Activated CD4-positive, alpha-beta T cell treated with anti-CD3 and anti-CD28 coated beads for 36 hours (primary cell): ENCODE measurements at regions of chr6 and their contacts with region 1.

Region 1: DNA sequence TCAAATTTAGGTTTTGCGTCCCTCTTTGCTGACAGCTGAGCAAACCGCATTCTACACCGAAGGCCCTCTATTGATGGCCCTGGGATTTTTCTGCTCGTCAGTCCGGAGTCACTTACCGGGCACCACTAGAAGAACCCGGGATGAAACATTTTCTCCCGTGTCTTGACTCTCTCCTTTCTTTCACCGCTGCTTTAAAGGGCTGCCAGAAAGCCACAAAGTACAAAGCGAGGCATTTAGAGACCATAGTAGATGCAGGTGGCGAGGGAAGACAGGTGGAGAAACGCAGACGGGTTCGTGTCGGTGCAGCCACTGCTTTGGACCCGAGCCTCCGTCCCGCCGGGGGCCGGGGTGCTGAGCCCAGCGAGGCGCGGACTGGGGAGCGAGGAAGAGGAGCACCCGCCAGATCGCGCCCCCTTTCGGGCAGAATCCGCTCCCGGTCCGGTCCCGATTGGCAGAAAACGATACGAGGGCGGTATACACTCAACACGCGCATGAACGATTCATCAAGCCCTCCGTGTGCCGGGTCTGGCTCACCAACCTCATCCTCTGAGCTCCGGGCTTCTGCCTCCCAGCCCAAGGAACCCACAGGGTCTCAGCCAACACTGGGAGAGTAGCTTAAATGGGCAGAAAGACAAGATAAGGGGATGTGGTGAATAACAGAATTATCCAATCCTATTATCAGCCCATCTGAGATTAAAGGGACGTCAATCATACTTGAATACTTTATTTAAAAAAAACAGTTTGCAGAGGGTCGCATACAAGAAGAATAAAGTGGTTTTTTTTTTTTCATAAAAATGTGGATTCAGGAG is 84.9 kb downstream of the TRIM27 start:
- DNase-seq: peak; percentile 94
- ATAC-seq: peak; percentile 87
- H3K4me3 Mint-ChIP-seq: peak overlapping the region; percentile 83
- H3K27ac Mint-ChIP-seq: peak overlapping the region; percentile 75
- H3K4me1 Mint-ChIP-seq: peaks cover 15% of the 10 kb centered on the region
- H3K27me3 Mint-ChIP-seq: peaks cover 17% of the 10 kb centered on the region

Region 2: DNA sequence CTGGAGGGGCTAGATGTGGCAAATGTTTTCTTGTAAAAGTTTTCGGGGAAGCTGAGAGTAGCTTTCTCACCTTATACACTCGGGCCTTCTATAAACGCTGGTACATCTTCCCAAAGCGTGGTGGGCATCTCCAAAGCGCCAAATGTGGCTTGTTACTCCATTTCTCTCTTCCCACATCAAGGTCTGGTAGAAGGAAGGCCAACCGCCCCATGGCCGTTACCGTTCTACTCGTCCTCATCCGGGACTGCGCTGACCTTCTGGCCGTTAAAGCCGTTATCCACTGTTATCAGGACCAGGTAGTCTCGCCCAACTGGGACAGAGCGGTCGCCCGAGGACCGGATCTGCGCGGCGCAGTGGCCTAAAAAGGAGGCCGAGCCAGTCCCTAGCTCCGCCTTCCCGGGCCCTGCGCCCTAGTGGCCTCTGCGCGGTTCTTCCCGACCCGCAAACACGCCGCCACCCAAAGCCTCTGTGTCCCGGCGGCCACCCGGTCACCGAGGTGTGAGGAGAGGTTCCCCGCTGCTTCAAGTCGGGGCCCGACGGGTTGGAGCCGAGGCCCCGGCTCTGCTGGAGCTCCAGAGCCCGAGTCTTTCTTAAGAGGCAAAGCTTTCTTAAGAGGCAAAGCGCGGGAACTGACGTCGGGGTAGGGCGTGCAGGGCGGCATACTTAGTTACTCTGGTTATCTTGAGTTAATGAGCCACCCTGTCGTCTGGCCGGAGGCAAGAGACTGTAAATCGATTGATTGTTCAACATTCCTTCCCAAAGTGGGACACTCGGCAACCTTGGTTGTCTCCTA is 222.7 kb before region 1 on chr6:
- CTCF ChIA-PET with region 1: no interaction called
- POLR2A ChIA-PET with region 1: no interaction called
- intact Hi-C with region 1: no loop called
- DNase-seq: no peak
- ATAC-seq: no peak
- H3K4me3 Mint-ChIP-seq: no peak overlapping the region
- H3K27ac Mint-ChIP-seq: no peak overlapping the region
- H3K4me1 Mint-ChIP-seq: no peaks in the 10 kb centered on the region
- H3K27me3 Mint-ChIP-seq: peaks cover 48% of the 10 kb centered on the region

Region 3: DNA sequence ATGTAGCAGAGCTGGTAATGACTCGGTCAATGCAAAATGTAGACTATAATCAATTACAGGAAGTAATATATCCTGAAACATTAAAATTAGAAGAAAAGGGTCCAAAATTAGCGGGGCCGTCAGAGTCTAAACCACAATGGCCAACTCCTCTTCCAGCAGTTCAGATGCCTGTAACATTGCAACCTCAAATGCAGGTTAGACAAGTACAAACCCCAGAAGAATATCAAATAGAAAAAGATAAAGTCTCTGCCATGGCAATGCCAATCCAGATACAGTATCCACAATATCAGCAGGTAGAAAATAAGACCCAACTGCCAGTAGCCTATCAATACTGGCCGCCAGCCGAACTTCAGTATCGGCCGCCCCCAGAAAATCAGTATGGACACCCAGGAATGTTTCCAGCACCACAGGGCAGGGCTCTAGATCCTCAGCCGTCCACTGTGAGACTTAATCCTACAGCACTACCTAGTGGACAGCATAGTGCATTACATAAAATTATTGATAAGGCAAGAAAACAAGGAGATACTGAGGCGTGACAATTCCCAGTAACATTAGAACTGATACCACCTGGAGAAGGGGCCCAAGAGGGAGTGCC is 154.8 kb before region 1 on chr6:
- CTCF ChIA-PET with region 1: interaction called, 5 read pairs
- POLR2A ChIA-PET with region 1: no interaction called
- intact Hi-C with region 1: loop called in 1 of 2 experiments (anchors 5 kb)
- DNase-seq: peak; percentile 13
- ATAC-seq: peak; percentile 53
- H3K4me3 Mint-ChIP-seq: no peak overlapping the region
- H3K27ac Mint-ChIP-seq: no peak overlapping the region
- H3K4me1 Mint-ChIP-seq: peaks cover 6% of the 10 kb centered on the region
- H3K27me3 Mint-ChIP-seq: peaks cover 54% of the 10 kb centered on the region

Region 4: DNA sequence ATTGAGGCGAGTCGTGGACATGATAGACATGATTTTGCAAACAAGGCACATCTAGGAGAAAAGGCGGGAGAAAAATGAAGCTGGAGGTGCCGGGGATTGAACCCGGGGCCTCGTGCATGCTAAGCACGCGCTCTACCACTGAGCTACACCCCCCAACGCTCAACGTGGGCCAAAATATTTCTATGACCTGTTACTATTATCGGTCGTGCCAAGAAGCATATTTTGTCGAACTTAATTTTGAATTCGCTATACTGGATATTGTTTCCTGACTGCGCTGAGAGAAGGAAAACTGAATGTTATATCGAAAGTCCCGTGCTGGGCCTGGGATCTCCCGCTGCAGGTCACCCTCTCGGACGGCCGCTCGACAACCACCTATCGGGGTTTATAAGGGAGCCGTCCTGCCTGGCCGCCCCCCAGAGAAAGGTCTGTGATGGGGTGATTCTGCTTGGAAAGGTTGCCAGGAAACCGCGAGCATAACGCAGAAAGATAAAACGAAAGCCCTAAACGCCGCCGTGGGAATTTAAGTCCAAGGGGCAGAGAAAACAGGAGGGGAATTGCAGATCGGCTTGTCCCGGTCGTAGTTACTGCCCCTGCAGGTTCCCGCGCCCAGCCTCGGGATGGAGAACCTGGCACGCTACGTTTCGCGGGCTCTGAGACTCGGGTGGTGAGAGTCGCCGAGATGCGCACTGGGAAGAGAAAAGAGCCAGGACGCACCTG is 24.9 kb after region 1 on chr6:
- CTCF ChIA-PET with region 1: interaction called, 69 read pairs
- POLR2A ChIA-PET with region 1: interaction called, 6 read pairs
- intact Hi-C with region 1: loop called (anchors 1 kb)
- DNase-seq: peak; percentile 88
- ATAC-seq: peak; percentile 45
- H3K4me3 Mint-ChIP-seq: peak overlapping the region; percentile 74
- H3K27ac Mint-ChIP-seq: peak overlapping the region; percentile 78
- H3K4me1 Mint-ChIP-seq: peaks cover 36% of the 10 kb centered on the region
- H3K27me3 Mint-ChIP-seq: peaks cover 1% of the 10 kb centered on the region

Region 5: DNA sequence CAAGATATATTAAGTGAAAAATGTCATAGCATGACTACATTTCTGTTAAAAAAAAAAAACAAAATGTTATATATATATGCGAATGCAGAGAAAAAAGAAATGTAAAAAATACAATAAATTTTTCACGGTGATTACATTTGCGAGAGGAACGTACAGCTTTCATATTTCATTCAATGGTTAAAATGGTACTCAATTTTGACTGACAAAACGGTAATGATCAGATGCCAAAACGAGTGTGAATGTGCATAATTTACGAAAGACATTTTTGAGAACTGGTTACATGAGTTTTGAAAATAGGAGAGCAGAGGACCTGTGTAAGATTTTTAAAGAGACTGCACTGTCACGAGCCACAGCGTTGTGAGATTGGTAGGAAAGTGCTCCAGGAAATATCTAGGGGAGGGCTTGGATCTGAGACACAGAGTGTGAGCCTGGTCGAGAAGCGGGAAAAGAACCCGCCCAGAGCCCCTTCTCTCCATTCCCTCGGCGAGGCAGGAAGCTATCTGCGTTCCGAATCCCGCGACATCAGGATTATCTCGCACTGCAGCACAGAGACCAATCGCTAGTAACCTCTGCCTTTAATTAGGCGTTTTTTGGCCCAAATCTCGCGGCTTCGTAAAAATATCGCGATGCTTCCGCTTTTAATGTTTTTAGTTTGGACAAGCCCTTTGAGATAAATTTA is 56.4 kb after region 1 on chr6:
- CTCF ChIA-PET with region 1: interaction called, 20 read pairs
- POLR2A ChIA-PET with region 1: interaction called, 5 read pairs
- intact Hi-C with region 1: loop called (anchors 1 kb)
- DNase-seq: peak; percentile 94
- ATAC-seq: peak; percentile 82
- H3K4me3 Mint-ChIP-seq: peak overlapping the region; percentile 98
- H3K27ac Mint-ChIP-seq: peak overlapping the region; percentile 99
- H3K4me1 Mint-ChIP-seq: peaks cover 9% of the 10 kb centered on the region
- H3K27me3 Mint-ChIP-seq: no peaks in the 10 kb centered on the region

Region 6: DNA sequence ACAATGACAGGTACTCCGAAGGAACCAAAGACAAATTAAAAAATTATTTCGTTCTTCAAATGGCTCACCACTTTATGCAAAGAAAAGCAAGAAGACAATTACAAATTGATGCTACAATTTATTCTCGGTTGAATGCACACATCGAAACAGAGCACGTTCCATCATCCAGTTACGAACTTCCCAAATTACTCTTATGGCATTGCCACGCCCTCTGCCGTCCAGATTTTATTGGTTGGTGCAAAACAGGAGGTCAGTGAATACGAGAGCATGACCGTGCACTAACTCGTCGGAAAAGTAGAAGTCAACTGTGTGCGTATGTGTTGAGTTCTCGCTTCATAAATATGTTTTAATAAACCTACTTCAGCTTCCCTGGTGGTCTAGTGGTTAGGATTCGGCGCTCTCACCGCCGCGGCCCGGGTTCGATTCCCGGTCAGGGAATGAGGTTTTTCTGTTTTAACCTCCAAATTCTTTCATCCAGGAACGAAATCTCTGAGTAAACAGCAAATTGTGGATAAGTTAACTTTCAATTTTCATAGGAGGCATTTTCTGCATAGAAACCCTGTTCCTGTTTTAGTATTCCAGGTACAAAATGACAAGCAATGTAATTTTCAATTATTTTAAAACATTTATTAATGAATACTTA is 143.1 kb after region 1 on chr6:
- CTCF ChIA-PET with region 1: interaction called, 17 read pairs
- POLR2A ChIA-PET with region 1: no interaction called
- intact Hi-C with region 1: loop called (anchors 1 kb)
- DNase-seq: peak; percentile 82
- ATAC-seq: peak; percentile 42
- H3K4me3 Mint-ChIP-seq: peak overlapping the region; percentile 86
- H3K27ac Mint-ChIP-seq: peak overlapping the region; percentile 79
- H3K4me1 Mint-ChIP-seq: peaks cover 42% of the 10 kb centered on the region
- H3K27me3 Mint-ChIP-seq: peaks cover 47% of the 10 kb centered on the region

Region 7: GRCh38 chr6:29016559-29017427 is 178.0 kb after region 1 on chr6:
- CTCF ChIA-PET with region 1: interaction called, 87 read pairs
- POLR2A ChIA-PET with region 1: interaction called, 4 read pairs
- intact Hi-C with region 1: loop called (anchors 1 kb)
- DNase-seq: peak; percentile 90
- ATAC-seq: peak; percentile 87
- H3K4me3 Mint-ChIP-seq: peak overlapping the region; percentile 77
- H3K27ac Mint-ChIP-seq: peak overlapping the region; percentile 78
- H3K4me1 Mint-ChIP-seq: peaks cover 10% of the 10 kb centered on the region
- H3K27me3 Mint-ChIP-seq: peaks cover 20% of the 10 kb centered on the region

Region 8: GRCh38 chr6:29092957-29093356 is 254.1 kb after region 1 on chr6:
- CTCF ChIA-PET with region 1: no interaction called
- POLR2A ChIA-PET with region 1: no interaction called
- intact Hi-C with region 1: no loop called
- DNase-seq: no peak
- ATAC-seq: no peak
- H3K4me3 Mint-ChIP-seq: no peak overlapping the region
- H3K27ac Mint-ChIP-seq: no peak overlapping the region
- H3K4me1 Mint-ChIP-seq: no peaks in the 10 kb centered on the region
- H3K27me3 Mint-ChIP-seq: peaks cover 18% of the 10 kb centered on the region